Activated CD4-positive, alpha-beta T cell treated with anti-CD3 and anti-CD28 coated beads, Interleukin-2, amount 10 ng/mL, durations not matched to agents 7 days and 5 days (primary cell): ENCODE measurements at regions of chr14 and their contacts with region 1.

Region 1: DNA sequence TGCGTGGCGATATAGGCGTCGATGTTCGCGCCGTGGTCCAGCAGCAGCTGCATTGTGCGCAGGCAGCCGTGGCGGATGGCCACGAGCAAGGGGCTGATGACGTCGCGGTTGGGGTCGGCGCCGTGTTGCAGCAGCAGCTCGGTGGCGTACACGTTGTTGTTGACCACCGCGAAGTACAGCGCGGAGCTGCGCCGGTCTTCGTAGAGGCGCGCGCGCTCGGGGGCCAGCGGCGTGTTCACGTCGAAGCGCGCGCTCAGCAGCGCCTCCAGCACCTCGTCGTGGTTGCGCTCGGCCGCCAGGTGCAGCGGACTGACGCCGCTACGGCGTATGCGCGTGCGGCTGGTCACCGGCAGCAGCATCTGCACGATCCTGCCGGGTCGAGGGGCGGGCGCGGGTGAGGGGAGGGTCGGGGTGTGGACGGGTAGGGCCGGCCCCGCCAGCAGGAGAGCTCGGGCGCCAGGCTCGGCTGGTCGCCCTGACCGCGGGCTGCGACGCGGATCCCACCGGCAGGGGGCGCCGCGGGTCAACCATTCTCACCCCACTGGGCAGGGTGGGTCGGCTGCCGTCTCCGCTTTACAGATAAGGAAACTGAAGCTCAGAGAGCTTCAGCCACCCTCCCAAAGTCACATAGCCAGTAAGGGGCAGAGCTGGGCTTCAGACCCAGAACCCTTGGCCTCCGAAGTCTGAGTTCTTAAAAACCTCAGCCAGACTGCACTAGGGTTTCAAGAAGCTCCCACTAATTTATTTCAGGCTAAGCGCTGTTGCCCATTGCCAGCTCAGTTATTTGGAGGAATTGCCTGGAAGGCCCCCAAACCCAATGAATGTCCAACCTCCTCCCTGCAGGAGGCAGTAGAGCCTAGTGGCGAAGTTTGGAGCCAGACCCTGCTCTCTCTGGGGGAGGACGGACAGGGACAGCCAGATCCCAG is 12.4 kb downstream of the FAM181A start:
- DNase-seq: peak; percentile 87
- H3K4me3 Mint-ChIP-seq: peak overlapping the region; percentile 62
- H3K27ac Mint-ChIP-seq: peak overlapping the region; percentile 77
- H3K4me1 Mint-ChIP-seq: peaks cover 31% of the 10 kb centered on the region
- H3K27me3 Mint-ChIP-seq: no peaks in the 10 kb centered on the region

Region 2: DNA sequence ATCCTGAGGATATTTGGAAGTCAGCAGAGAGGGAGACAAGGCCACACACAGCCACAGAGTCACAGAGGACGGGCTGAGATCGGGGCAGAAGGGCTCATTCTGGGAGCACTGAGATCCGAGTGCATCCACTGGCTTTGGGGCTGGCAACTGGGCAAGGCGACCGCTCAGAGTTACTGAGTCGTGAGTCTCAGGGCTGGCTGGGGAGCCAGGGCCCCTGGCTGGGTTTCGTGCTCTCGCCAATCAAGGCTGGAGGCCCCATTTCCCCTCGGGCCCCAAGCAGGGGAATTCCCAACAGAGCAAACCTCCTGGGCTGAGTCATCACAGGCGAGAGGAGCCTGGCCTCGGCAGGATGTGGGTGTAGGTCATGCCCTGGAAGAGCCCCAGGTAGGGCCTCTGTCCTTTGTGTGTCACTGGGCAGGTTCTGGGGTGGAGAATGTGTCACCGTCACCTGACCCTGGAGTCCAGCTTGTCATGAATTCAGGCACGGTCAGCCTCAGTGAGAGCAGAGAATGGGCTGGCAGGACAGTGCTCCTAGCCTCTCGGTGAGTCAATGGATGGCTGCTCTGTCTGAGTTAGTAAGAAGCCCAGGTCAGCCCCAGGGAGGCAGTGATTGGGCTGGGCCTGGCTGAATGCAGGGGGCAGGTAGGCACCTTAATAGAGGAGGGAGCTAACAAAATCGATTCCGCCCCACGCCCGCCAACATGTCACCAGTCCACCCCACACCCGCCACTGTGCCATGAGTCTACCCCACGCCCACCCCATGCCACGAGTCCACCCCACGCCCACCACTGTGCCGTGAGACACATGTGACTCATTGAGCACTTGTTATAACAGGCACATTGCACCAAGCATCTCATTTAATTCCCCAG is 19.9 kb after region 1 on chr14:
- CTCF ChIA-PET with region 1: interaction called, 54 read pairs
- POLR2A ChIA-PET with region 1: no interaction called
- DNase-seq: peak; percentile 93
- H3K4me3 Mint-ChIP-seq: peak overlapping the region; percentile 51
- H3K27ac Mint-ChIP-seq: peak overlapping the region; percentile 90
- H3K4me1 Mint-ChIP-seq: peaks cover 97% of the 10 kb centered on the region
- H3K27me3 Mint-ChIP-seq: no peaks in the 10 kb centered on the region

Region 3: GRCh38 chr14:93970549-93970946 is 31.0 kb after region 1 on chr14:
- CTCF ChIA-PET with region 1: interaction called, 81 read pairs
- POLR2A ChIA-PET with region 1: interaction called, 7 read pairs
- DNase-seq: peak; percentile 71
- H3K4me3 Mint-ChIP-seq: peak overlapping the region; percentile 79
- H3K27ac Mint-ChIP-seq: peak overlapping the region; percentile 98
- H3K4me1 Mint-ChIP-seq: peaks cover 89% of the 10 kb centered on the region
- H3K27me3 Mint-ChIP-seq: no peaks in the 10 kb centered on the region

Region 4: DNA sequence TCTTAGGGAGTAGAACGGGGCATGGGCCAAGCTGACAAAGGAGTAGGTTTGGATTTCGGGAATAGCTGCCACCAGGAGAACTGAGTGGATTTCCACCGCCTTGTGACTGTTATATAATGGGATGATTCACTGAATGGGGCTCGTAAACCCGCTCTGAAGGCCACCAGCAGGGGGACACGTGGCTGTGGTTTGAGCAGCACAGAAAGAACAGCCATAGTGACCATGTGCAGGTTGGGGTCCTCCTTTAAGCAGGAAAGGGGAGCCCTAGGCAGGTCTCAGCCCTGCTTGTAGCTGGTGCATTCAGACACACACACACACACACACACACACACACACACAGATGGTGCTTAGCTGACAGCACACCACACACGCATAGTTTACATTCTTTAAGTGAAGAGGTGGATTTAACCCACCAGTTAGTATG is 45.4 kb after region 1 on chr14:
- CTCF ChIA-PET with region 1: interaction called, 30 read pairs
- POLR2A ChIA-PET with region 1: no interaction called
- DNase-seq: no peak
- H3K4me3 Mint-ChIP-seq: no peak overlapping the region
- H3K27ac Mint-ChIP-seq: no peak overlapping the region
- H3K4me1 Mint-ChIP-seq: peaks cover 12% of the 10 kb centered on the region
- H3K27me3 Mint-ChIP-seq: no peaks in the 10 kb centered on the region

Region 5: GRCh38 chr14:94009767-94010166 is 70.2 kb after region 1 on chr14:
- CTCF ChIA-PET with region 1: interaction called, 18 read pairs
- POLR2A ChIA-PET with region 1: no interaction called
- DNase-seq: no peak
- H3K4me3 Mint-ChIP-seq: no peak overlapping the region
- H3K27ac Mint-ChIP-seq: peak overlapping the region; percentile 48
- H3K4me1 Mint-ChIP-seq: peaks cover 73% of the 10 kb centered on the region
- H3K27me3 Mint-ChIP-seq: peaks cover 6% of the 10 kb centered on the region

Region 6: GRCh38 chr14:94026173-94026888 is 86.8 kb after region 1 on chr14 and contains the start of gene OTUB2:
- CTCF ChIA-PET with region 1: interaction called, 14 read pairs
- POLR2A ChIA-PET with region 1: interaction called, 3 read pairs
- DNase-seq: peak; percentile 97
- H3K4me3 Mint-ChIP-seq: peak within 1 kb of the TSS; percentile 73
- H3K27ac Mint-ChIP-seq: peak within 1 kb of the TSS; percentile 71
- H3K4me1 Mint-ChIP-seq: peaks cover 49% of the 10 kb centered on the region
- H3K27me3 Mint-ChIP-seq: no peaks in the 10 kb centered on the region
- total RNA-seq, gene OTUB2: 2.3 to 2.4 TPM

Region 7: GRCh38 chr14:94077111-94077821 is 137.7 kb after region 1 on chr14:
- CTCF ChIA-PET with region 1: no interaction called
- POLR2A ChIA-PET with region 1: no interaction called
- DNase-seq: no peak
- H3K4me3 Mint-ChIP-seq: peak overlapping the region; percentile 13
- H3K27ac Mint-ChIP-seq: no peak overlapping the region
- H3K4me1 Mint-ChIP-seq: peaks cover 54% of the 10 kb centered on the region
- H3K27me3 Mint-ChIP-seq: no peaks in the 10 kb centered on the region

Region 8: DNA sequence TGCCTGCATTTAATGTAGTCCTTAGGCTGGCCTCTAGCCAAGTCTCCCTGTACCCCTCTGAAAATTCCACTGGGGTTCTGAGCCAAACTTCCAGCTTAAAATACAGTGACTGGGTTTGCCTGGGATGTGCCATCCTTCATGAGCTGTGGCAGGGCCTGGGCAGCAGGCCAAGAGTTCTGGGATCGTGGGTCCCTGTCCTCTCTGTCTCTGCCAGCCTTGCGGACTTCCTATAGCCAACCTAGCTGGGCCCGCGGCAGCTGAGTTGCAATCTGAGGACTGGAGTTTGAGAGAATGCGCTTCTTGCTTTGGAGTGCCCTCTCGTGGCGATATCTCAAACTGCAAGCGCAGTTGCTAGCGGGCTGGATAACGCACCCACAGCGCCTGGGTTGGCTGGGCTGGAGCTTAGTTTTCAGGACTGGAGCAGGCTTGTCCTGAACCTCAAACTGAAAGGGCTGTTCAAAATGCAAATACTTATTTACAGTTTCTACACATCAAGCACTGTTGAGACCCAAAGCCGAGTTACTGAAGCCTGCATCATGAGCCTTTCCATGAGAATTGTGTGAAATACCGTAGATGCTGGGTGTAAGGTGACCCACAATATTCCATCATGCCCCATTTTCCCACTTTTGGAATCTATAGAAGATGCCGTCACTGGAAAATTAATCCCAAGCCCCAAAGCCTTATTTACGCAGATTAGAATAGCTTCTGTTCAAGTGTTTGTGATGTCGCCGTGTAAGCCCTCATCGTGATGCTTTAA is 197.2 kb after region 1 on chr14:
- CTCF ChIA-PET with region 1: interaction called, 11 read pairs
- POLR2A ChIA-PET with region 1: no interaction called
- DNase-seq: peak; percentile 88
- H3K4me3 Mint-ChIP-seq: no peak overlapping the region
- H3K27ac Mint-ChIP-seq: no peak overlapping the region
- H3K4me1 Mint-ChIP-seq: peaks cover 10% of the 10 kb centered on the region
- H3K27me3 Mint-ChIP-seq: peaks cover 26% of the 10 kb centered on the region